ENCODE measurements at regions of chr3 and their contacts with region 1.

Region 1: DNA sequence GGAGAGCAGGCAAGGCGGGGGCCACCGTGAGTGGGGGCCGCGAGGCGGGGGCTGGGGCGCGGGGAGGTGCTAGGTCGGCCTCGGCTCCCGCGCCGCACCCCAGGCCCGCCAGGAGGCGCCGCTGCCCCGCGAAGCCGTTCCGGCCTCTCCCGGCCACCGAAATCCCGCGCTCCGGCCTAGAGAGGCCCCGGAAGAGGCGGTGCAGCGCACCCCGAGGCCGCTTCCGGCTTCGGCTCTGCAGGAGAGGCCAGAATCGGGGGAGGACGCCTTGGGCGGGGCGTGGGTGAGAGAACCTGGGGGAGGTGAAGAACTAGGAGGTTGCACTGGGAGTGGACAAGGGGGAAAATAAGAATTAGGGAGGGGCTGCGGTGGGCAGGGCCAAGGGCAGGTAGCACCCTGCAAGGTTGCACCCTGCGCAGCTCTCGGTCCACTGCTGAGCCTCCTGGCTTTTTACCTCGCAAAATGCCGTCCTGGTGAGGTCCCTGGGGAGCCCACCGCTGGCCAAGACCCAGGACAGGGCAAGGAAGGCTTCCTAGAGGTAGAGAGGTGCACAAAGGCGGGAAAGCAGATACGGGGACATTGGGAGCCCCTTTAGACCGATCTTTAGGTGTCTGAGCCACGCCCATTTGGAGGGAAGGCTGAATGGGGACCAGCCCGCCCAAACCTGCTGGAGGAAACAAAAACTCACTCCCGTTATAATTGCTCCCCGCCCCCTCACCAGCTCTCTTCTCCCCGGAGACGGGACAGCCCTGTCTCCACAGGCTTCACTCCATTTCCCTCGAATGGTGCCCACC is 8.4 kb upstream of the GNAI2 start:
- DNase-seq: peak in 1 of 2 donors; percentile 93
- H3K4me3 ChIP-seq: peak overlapping the region; percentile 72 to 90
- H3K27ac ChIP-seq: peak overlapping the region; percentile 91
- H3K4me1 ChIP-seq: peaks cover 25% of the 10 kb centered on the region
- H3K27me3 ChIP-seq: no peaks in the 10 kb centered on the region
- CTCF ChIP-seq: peak; percentile 72 to 93 (median 72)
- POLR2A ChIP-seq: no peak

Region 2: DNA sequence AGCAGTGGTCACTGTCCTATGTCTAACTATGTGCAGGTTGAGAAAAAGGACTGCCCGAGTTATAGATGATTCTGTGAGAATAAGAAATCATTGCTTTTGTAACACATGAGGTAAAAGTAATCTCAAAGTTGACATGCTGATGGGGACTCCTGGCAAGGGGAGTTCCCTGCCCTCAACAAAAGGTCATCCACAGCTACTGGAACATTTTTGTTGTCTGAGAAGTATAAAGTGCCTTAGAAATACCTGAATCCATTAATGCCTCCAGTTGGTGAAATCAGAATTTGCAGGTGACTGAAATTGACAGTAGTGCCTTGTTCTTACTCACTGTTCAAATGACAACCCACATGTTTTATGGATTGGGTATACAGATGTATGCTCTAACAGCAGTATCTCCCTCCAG is 182.6 kb before region 1 on chr3:
- intact Hi-C with region 1: no loop called
- DNase-seq: no peak
- H3K4me3 ChIP-seq: no peak overlapping the region
- H3K27ac ChIP-seq: no peak overlapping the region
- H3K4me1 ChIP-seq: peaks cover 3% of the 10 kb centered on the region
- H3K27me3 ChIP-seq: no peaks in the 10 kb centered on the region
- CTCF ChIP-seq: no peak
- POLR2A ChIP-seq: no peak

Region 3: DNA sequence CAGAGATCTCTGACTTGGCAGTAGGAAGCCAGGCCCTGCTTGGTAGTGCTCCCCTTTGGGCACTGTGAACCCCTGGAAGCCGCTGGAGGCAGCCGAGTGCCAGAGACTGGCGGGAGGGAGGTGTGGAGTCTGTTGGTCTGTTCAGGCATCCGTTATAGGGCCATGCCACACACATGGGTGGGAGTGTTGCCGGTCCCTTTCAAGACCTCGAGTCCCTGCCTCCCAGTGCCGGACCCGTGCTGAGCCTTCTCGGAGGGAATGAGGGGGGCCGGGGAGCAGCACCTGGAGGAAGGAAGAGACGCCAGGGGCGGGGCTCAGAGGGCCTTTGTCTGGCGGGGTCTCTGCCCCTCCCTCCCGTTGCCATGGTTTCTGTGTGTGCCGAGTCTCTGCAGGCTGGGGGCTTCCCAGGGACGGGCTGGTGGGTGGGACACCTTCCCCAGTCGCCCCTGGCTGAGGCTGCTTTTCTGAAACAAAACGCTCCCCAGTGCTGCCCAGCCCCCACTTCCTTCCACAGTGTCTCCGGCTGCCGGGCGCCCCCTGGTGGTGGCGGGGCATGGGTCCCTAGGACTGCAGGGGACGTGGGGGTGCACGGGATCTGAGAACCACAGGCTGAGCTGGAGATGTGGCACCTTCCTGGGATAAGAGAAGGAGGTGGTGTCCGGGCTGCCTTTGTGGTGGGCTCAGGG is 18.4 kb after region 1 on chr3:
- intact Hi-C with region 1: loop called (anchors 2 kb)
- DNase-seq: no peak
- H3K4me3 ChIP-seq: peak overlapping the region; percentile 40 to 47
- H3K27ac ChIP-seq: peak overlapping the region; percentile 92
- H3K4me1 ChIP-seq: peaks cover 100% of the 10 kb centered on the region
- H3K27me3 ChIP-seq: no peaks in the 10 kb centered on the region
- CTCF ChIP-seq: peak; percentile 87 to 99 (median 96)
- POLR2A ChIP-seq: no peak

Region 4: DNA sequence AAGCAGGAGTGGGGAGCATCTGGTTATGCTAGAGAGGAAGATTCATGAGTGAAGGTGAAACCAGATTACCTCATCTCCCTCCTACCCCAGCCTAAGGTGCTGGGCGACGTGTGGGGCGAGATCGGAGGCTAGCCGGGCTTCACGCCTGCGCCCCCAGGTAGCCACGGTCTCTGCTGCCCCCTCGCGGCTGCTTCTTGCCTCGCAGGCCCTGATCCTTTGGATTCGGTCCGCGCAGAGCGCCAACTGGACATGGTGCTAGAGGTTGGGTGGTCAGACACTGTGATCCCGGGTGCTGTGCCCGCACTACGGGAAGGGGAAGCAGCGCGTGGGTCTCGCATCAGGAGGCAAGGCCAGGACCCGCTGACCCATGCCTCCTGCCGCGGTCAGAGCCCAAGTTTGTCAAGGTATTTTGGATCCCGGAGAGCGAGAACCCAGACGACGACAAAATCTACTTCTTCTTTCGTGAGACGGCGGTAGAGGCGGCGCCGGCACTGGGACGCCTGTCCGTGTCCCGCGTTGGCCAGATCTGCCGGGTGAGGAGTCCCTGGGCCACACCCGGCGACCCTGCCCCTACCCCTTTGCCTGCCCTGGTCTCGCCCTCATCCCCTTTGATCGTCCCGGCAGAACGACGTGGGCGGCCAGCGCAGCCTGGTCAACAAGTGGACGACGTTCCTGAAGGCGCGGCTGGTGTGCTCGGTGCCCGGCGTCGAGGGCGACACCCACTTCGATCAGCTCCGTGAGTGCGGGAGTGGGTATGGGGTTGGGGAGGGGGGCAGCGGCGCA is 45.5 kb after region 1 on chr3:
- intact Hi-C with region 1: loop called (anchors 5 kb)
- DNase-seq: no peak
- H3K4me3 ChIP-seq: peak overlapping the region; percentile 23 to 28
- H3K27ac ChIP-seq: peak overlapping the region; percentile 37
- H3K4me1 ChIP-seq: peaks cover 66% of the 10 kb centered on the region
- H3K27me3 ChIP-seq: no peaks in the 10 kb centered on the region
- CTCF ChIP-seq: peak; percentile 91 to 100 (median 99)
- POLR2A ChIP-seq: no peak

Measured in vagina (tissue), 2 donors.